HepG2 (cell line): ENCODE measurements at regions of chr3 and their contacts with region 1.

Region 1: DNA sequence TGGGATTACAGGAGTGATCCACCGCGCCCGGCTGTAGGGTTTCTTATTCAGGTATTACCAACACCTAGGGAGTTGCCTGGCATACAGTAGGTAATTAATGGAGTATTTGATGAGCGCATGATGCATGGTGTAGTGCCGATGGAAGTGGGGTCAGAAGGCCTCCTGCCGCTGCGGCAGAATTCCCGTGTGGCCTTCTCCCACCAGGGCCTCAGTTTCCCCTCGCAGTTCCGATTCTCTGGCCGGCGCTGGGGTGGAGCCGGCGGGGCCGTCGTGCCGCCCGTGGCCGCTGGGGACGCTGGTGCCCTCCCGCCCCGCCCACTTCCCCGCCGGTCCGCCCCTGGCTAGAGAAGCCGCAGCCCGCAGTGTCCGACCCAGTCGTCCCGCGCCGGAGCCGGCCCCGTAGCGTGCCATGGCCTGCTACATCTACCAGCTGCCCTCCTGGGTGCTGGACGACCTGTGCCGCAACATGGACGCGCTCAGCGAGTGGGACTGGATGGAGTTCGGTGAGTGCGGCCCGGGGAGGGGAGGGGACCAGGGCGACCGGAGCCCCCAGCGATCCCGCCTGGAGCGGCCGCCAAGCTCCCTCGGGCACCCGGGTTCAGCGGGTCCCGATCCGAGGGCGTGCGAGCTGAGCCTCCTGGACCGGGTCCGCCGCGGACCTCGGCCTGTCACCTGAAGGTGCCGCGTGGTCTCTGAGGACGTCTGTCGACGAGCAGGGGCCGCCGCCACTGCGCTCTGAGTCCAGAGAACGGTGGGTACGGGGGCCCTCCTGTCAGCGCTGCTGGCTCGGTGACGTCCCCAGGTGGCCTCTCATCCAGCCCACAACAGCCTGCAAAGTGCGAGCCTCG is at the start of gene IRAK2:
- DNase-seq: peak; percentile 35
- ATAC-seq: peak; percentile 87
- H3K4me3 ChIP-seq: peak within 1 kb of the TSS; percentile 85 to 95 (median 88)
- H3K27ac ChIP-seq: peak within 1 kb of the TSS; percentile 76
- H3K4me1 ChIP-seq: peaks cover 70% of the 10 kb centered on the region
- H3K27me3 ChIP-seq: no peaks in the 10 kb centered on the region; a peak in 1 of 5 replicates
- CTCF ChIP-seq: peak; percentile 72
- EP300 ChIP-seq: peak in 1 of 2 experiments; percentile 18; a peak in 1 of 4 replicates
- POLR2A ChIP-seq: peak; percentile 78 to 91
- RAD21 ChIP-seq: no peak; the same call in 1 of the 2 replicates
- total RNA-seq, gene IRAK2: 13.1 and 15.3 TPM in 2 replicates

Region 2: DNA sequence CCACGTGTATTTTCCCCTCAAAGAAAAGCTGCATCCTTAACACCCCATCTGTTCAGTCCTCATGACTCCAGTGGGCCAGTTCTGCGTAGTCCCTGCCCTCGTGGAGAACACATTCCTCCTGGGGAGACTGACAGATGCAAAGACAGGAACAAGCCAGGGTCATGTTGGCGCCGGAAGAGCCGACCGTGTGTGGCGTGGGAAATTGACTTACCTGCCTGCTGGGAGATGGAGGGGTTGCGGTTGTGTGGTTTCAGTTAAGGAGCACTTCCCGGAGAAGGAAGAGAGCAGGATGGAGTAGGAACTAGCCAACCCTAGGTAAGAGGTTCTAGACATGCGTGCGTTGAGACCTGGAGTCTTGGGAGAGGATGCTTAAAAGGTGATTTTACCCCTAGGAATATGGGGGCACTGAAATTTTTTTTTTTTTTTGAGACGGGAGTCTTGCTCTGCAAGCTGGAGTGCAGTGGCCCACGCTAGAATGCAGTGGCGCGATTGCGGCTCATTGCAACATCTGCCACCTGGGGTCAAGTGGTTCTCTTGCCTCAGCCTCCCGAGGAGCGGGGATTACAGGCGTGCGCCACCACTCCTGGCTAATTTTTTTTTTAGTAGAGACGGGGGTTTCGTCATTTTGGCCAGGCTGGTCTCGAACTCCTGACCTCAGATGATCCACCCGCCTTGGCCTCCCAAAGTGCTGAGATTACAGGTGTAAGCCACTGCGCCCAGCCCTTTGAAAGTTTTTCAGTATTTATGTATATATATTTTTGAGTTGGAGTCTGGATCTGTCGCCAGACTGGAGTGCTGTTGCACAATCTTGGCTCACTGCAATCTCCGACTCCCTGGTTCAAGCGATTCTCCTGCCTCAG is 21.8 kb before region 1 on chr3:
- CTCF ChIA-PET with region 1: no interaction called
- POLR2A ChIA-PET with region 1: interaction called, 14 read pairs
- in situ Hi-C with region 1: no loop called
- intact Hi-C with region 1: no loop called
- DNase-seq: no peak
- ATAC-seq: peak; percentile 23
- H3K4me3 ChIP-seq: peak overlapping the region; percentile 57 to 89 (median 66)
- H3K27ac ChIP-seq: peak overlapping the region; percentile 39
- H3K4me1 ChIP-seq: peaks cover 63% of the 10 kb centered on the region
- H3K27me3 ChIP-seq: no peaks in the 10 kb centered on the region
- CTCF ChIP-seq: no peak
- EP300 ChIP-seq: no peak
- POLR2A ChIP-seq: no peak
- RAD21 ChIP-seq: no peak

Region 3: GRCh38 chr3:10192953-10193691 is 28.4 kb after region 1 on chr3:
- CTCF ChIA-PET with region 1: no interaction called
- POLR2A ChIA-PET with region 1: interaction called, 19 read pairs
- in situ Hi-C with region 1: no loop called
- intact Hi-C with region 1: no loop called
- DNase-seq: peak; percentile 28
- ATAC-seq: peak; percentile 39
- H3K4me3 ChIP-seq: no peak overlapping the region
- H3K27ac ChIP-seq: peak overlapping the region; percentile 65
- H3K4me1 ChIP-seq: peaks cover 60% of the 10 kb centered on the region
- H3K27me3 ChIP-seq: no peaks in the 10 kb centered on the region
- CTCF ChIP-seq: 0 out of 2 replicates have a peak, but pooled peaks have one; percentile 11
- EP300 ChIP-seq: no peak
- POLR2A ChIP-seq: no peak
- RAD21 ChIP-seq: no peak

Region 4: DNA sequence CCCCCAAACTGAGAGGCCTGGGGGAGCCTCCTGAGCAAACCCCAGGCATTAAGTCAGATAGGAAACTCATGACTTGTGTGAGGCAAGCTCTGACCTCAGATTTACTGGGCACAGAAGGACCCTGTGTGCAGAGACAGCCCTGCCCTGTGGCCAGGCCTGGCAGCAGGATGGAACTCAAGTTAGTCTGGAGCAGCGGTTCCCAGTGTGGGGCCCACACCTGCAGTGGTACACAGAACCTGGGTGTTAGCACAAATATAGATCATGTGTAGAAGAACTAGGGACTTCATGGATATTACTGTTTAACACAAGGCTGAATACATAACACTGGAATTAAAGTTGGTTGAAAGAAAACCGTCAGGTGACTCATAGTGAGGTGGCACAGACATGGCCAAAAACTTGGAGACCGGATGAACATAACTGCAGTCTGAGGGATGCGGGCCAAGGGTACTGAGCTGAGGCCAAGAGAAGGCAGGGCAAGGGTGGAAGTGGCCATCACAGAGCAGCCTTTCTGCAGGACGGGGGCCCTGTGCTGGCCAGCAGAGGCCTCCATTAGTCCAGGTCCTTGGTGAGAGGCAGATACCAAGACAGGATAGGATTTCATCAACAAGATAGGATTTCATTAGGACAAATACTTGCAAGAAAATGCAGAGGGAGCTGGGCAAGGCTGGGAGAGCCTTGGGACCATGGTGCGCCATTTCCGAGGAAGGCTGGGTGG is 40.8 kb after region 1 on chr3:
- CTCF ChIA-PET with region 1: no interaction called
- POLR2A ChIA-PET with region 1: interaction called, 38 read pairs
- in situ Hi-C with region 1: no loop called
- intact Hi-C with region 1: loop called (anchors 5 kb)
- DNase-seq: no peak
- ATAC-seq: no peak
- H3K4me3 ChIP-seq: no peak overlapping the region
- H3K27ac ChIP-seq: peak overlapping the region; percentile 93
- H3K4me1 ChIP-seq: peaks cover 60% of the 10 kb centered on the region
- H3K27me3 ChIP-seq: no peaks in the 10 kb centered on the region
- CTCF ChIP-seq: no peak
- EP300 ChIP-seq: no peak
- POLR2A ChIP-seq: no peak
- RAD21 ChIP-seq: no peak